MCF 10A (cell line): ENCODE measurements at regions of chr20 and their contacts with region 1.

Region 1: GRCh38 chr20:20860078-20860806 is 147.8 kb upstream of the RALGAPA2 start:
- DNase-seq: peak; percentile 89
- H3K4me3 Mint-ChIP-seq: no peak overlapping the region
- H3K27ac Mint-ChIP-seq: no peak overlapping the region
- H3K4me1 Mint-ChIP-seq: peaks cover 9% of the 10 kb centered on the region
- H3K27me3 Mint-ChIP-seq: no peaks in the 10 kb centered on the region
- CTCF ChIP-seq: peak; percentile 85

Region 2: DNA sequence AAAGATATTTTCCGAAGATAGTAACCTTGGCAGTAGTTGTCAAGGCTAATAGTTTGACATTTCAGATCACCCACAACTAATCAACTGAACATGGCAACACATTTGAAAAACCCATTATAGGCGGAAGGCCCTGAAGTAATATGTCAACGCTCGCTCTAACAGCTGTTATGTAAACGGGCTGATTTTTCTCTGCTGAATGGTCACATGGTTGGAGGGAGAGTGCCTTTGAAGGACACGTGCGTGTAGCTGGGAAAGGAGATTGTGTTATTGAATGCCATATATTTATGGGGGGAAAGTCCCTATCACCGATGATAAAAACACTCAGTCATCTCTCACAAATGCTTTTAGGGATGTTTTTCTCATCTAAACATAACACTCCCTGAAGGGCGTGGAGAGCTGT is 12.2 kb after region 1 on chr20:
- CTCF ChIA-PET with region 1: interaction called, 134 read pairs
- POLR2A ChIA-PET with region 1: no interaction called
- intact Hi-C with region 1: no loop called
- DNase-seq: no peak
- H3K4me3 Mint-ChIP-seq: no peak overlapping the region
- H3K27ac Mint-ChIP-seq: no peak overlapping the region
- H3K4me1 Mint-ChIP-seq: no peaks in the 10 kb centered on the region
- H3K27me3 Mint-ChIP-seq: peaks cover 52% of the 10 kb centered on the region
- CTCF ChIP-seq: no peak

Region 3: DNA sequence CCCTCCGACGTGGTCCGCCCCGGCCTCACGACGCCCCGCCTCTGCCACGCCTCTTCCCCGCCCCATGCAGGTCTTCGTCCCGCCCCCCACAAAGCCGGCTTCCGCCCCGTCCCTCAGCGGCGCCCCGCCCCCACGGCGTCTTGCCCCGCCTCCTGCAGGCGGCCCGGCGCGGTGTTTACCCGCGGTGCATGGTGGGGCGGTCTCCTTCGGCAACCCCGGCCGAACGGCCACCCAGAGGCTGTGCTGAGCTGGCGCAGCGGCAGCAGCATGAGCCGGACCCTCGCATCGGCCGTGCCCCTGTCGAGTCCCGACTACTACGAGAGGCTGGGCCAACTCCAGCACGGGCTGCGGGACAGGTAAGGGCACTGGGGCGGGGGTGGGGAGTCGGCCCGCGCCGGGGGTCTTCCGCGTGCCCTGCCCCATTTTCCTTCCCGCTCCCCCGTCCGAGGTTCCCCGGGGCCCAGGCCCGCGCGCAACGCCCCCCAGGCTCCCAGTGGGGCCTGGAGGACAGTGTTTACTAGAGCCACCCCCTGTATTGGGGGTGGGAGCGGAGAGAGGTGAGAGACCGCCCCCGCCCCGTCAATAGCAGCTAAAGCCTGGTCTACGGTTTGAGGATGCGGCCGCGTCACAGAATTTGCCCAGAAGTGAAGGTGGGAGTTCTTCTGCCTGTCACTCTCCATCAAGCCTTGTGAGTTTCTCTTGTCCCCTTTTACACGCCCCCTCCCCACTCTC is 265.8 kb after region 1 on chr20 and contains the start of gene KIZ:
- CTCF ChIA-PET with region 1: interaction called, 52 read pairs
- POLR2A ChIA-PET with region 1: interaction called, 14 read pairs
- intact Hi-C with region 1: loop called (anchors 1 kb)
- DNase-seq: peak; percentile 93
- H3K4me3 Mint-ChIP-seq: peak within 1 kb of the TSS; percentile 85
- H3K27ac Mint-ChIP-seq: peak within 1 kb of the TSS; percentile 86
- H3K4me1 Mint-ChIP-seq: peaks cover 9% of the 10 kb centered on the region
- H3K27me3 Mint-ChIP-seq: no peaks in the 10 kb centered on the region
- CTCF ChIP-seq: peak; percentile 31
- total RNA-seq, gene KIZ: 47.2 and 56.1 TPM in 2 replicates

Region 4: DNA sequence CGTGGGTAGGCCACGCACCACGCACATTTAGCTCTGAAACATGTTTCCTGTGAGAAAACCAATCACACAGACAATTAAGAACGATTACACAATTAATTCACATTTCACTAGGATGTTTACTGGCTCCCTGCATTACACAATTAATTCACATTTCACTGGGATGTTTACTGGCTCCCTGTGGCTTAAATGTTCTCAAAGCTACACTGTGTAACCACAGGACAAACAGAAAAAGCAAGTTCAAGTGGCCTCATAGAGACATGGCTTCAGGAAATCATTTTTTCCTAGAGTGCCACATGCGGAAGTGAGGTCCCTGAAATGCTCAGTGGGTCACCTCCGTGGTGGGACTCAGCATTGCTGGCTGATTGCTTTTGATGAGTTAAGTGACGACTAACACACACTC is 381.2 kb after region 1 on chr20:
- CTCF ChIA-PET with region 1: interaction called, 226 read pairs
- POLR2A ChIA-PET with region 1: interaction called, 8 read pairs
- intact Hi-C with region 1: no loop called
- DNase-seq: no peak
- H3K4me3 Mint-ChIP-seq: no peak overlapping the region
- H3K27ac Mint-ChIP-seq: no peak overlapping the region
- H3K4me1 Mint-ChIP-seq: no peaks in the 10 kb centered on the region
- H3K27me3 Mint-ChIP-seq: no peaks in the 10 kb centered on the region
- CTCF ChIP-seq: no peak

Region 5: GRCh38 chr20:21496452-21496851 is 636.2 kb after region 1 on chr20:
- CTCF ChIA-PET with region 1: interaction called, 316 read pairs
- POLR2A ChIA-PET with region 1: no interaction called
- intact Hi-C with region 1: no loop called
- DNase-seq: peak; percentile 34
- H3K4me3 Mint-ChIP-seq: no peak overlapping the region
- H3K27ac Mint-ChIP-seq: peak overlapping the region; percentile 91
- H3K4me1 Mint-ChIP-seq: peaks cover 6% of the 10 kb centered on the region
- H3K27me3 Mint-ChIP-seq: peaks cover 13% of the 10 kb centered on the region
- CTCF ChIP-seq: no peak

Region 6: DNA sequence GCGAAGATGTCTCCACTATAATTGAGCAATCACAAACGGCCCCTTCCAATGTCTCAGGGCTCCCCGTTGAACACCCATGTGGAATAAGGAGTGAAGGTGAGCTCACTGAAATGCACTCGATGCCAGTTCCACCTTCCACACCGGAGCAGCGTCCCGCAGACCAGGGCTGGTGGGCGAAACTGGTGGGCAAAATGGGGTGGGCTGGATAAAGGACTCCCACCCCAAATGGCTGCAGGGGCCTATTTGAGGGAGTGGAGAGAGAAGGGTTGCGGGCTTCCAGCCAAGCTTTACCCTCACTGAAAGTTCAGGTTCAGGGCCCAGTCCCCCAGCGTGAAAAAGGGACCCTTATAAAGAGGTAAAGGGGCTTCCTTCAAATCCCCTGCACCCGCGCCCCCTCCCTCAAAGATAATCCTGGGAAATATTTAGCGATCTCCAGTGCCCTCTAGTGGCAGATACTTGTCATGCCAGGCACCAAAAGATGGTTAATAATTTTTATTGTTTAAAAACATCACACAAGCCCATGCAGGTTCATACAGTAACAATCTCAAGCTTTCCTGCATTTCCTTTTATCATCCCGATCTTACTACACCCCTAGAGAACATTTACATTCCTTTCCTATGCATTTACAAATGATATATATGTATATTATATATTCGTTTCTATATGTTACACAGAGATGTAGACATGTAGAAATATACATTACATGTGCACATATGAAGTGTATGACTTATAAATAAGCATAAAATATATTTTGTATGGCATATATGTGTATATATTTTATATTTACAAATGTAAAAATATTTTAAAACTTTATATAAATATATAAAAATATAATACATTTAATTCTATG is 711.8 kb after region 1 on chr20:
- CTCF ChIA-PET with region 1: interaction called, 62 read pairs
- POLR2A ChIA-PET with region 1: no interaction called
- intact Hi-C with region 1: loop called (anchors 2 kb)
- DNase-seq: peak; percentile 28
- H3K4me3 Mint-ChIP-seq: no peak overlapping the region
- H3K27ac Mint-ChIP-seq: no peak overlapping the region
- H3K4me1 Mint-ChIP-seq: no peaks in the 10 kb centered on the region
- H3K27me3 Mint-ChIP-seq: peaks cover 34% of the 10 kb centered on the region
- CTCF ChIP-seq: peak; percentile 90